Left cardiac atrium (tissue), 4 donors: ENCODE measurements at regions of chr10 and their contacts with region 1.

Region 1: DNA sequence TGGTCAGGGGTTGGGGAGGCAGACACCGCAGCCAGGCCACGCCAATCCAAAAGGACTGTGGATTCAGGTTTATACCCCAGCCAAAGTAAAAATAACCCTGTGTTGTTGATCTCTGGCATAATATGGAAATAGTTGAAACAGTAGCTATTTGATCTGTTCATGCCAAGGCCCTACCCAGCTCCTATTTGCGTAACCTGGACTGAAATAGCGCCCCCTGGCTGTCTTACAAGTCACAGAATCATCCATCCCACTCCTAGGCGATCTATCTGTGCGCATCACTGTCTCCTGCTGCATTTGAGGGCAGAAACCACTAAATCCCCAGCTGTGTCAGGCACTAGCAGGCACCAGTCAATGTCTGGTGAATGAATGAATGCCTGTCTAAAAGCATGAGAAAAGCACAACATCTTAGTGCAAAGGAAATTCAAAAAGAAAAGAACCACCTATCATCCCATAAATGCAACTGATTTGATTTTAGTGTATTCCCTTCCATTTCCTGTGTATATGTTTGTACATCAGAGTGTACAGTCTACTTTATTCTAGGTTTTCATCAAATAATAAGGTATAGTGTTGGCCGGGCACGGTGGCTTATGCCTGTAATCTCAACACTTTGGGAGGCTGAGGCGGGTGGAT is 160.0 kb downstream of the SLIT1 start:
- DNase-seq: peak; percentile 52
- ATAC-seq: peak; percentile 34 to 61

Region 2: DNA sequence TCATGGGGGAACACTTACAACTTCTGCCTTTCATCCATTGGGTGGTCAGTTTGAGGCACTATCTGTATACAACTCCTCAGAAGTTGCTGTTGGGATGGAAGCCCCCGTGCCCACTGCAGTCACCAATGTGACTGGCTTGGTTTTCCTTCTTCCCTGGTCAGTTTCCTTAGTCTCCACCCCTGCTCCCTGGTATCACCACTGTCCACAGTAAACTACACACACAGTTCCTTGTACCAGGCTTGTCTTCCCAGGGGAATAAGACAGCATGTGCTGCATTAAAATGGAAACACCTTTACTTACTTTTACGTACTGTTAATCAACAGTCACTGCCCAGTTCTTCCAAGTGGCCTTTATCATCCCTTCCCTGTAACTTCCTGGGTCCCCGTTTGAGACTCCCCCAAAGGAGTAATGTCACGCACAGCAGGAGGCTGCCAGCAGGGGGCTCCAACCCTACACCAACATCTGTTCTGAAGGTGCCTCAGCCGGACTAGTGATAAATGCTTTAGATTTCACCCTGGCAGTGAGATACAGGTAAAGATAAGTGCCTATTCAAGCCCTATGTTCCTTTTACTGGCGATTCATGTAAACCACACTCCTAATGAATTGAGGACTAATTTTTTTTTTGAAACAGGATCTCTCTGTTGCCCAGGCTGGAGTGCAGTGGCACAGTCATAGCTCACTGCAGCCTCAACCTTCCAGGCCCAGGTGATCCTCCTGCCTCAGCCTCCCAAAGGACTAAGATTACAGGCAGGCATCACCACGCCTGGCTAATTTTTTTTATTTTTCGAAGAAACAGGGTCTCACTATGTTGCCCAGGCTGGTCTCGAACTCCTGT is 260.1 kb before region 1 on chr10:
- intact Hi-C with region 1: loop called in 1 of 2 experiments (anchors 5 kb)
- DNase-seq: peak; percentile 71
- ATAC-seq: peak; percentile 53 to 77

Region 3: DNA sequence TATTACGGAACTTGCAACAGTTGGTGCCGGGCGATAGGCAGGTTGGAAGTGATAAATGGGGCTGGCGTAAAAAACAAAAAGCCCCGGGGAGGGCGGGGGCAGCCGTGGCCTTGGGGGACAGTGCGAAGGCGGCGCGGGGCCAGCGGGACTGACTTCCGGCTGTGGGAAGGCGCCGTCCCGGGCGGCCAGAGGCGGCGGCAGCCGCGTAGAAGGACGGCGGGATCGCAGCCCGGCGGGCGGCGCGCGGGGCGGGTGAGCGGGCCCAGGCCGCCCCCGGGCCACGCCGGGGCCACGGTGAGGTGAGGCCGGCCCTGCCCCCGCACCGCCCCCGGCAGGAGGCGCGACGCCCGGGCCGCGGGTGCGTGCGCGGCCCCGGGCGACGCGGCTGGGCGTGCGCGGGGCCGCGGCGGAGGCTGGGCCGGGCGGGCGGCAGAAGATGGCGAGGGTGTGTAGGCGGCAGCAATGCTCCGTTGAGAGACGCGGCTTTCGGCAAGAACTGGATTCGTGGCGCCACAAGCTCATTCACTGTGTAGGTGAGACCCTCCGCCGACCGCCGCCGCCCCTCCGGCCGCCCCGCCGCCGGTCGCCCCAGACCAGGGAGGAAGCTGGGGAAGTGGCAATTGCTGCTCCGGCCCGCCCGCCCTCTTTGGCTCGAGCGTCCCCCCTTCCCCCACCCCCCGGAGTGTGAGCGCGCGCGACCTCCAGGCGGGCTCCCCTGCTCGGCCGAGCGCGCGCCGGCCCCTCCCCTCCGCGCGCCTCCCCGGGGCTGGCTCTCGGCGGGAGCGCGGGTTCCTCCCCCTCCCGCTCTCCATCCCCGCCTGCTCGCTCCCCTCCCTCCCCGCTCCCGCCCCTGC is 193.6 kb before region 1 on chr10 and contains the start of gene LCOR:
- intact Hi-C with region 1: loop called in 1 of 2 experiments (anchors 10 kb)
- DNase-seq: peak; percentile 88
- ATAC-seq: peak; percentile 89 to 92
- total RNA-seq, gene LCOR: 20.2 to 21.3 TPM

Region 4: GRCh38 chr10:96910488-96911395 is 115.0 kb before region 1 on chr10:
- intact Hi-C with region 1: loop called in 1 of 2 experiments (anchors 10 kb)
- DNase-seq: no peak
- ATAC-seq: peak in 1 of 2 donors; percentile 29